PC-3 (cell line): ENCODE measurements at regions of chr10 and their contacts with region 1.

Region 1: GRCh38 chr10:90148116-90148855 is 446.9 kb downstream of the KIF20B start:
- DNase-seq: peak; percentile 69
- ATAC-seq: peak; percentile 57
- H3K4me3 ChIP-seq: peak overlapping the region; percentile 17; the same call in 1 of the 2 replicates
- H3K27ac ChIP-seq: peak overlapping the region; percentile 57
- H3K4me1 ChIP-seq: peaks cover 30% of the 10 kb centered on the region
- H3K27me3 ChIP-seq: no peaks in the 10 kb centered on the region
- CTCF ChIP-seq: peak; percentile 70

Region 2: DNA sequence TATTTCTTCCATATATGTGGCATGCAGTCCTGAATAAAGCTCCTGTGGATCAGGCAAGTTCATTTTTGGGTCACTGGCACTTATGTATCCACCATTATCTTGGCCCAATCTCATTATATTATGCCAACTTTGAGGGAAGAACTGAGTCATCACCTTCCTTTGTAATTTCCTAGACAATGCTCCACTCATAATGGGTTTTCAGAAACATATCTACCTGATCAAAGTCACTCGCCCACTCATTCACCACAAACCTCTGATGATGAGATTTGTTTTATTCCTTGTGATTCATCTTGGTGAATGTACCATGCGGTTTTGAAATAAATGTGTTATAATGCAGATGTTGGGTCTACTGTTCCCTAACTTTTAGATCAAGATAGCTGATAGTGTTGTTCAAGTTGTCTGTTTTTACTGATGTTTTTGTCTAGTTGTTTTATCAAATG is 79.0 kb after region 1 on chr10:
- CTCF ChIA-PET with region 1: no interaction called
- POLR2A ChIA-PET with region 1: no interaction called
- intact Hi-C with region 1: loop called (anchors 5 kb)
- DNase-seq: peak; percentile 93
- ATAC-seq: peak; percentile 85
- H3K4me3 ChIP-seq: no peak overlapping the region
- H3K27ac ChIP-seq: peak overlapping the region; percentile 96
- H3K4me1 ChIP-seq: peaks cover 37% of the 10 kb centered on the region
- H3K27me3 ChIP-seq: no peaks in the 10 kb centered on the region
- CTCF ChIP-seq: no peak

Region 3: DNA sequence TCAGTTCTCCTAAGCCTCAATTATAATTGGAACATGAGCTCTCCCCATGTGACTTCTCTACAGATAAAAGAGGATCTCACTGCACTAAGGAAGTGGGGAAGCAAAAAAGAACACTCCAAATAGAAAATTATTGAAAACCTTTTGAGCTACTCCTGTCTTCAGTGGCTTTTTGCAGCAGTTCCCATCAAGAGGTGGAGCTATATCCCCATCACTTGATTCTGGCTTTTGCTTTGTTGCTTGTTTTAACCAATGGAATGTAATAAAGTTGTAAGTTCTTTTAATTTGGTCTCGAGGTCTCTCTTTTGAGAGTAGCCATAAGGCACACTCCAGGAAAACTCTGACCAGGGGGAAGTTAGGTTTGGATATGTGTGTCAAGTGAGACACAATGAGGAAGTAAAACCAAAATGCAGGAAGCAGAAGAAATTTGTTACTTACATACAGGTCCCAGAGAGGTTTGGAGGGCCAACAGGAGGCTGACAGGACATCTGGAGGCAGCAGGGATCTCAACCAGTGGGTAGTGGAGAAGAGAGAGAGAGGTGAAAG is 140.2 kb after region 1 on chr10:
- CTCF ChIA-PET with region 1: no interaction called
- POLR2A ChIA-PET with region 1: no interaction called
- intact Hi-C with region 1: loop called (anchors 1 kb)
- DNase-seq: peak; percentile 53
- ATAC-seq: peak; percentile 66
- H3K4me3 ChIP-seq: no peak overlapping the region
- H3K27ac ChIP-seq: peak overlapping the region; percentile 42
- H3K4me1 ChIP-seq: peaks cover 19% of the 10 kb centered on the region
- H3K27me3 ChIP-seq: no peaks in the 10 kb centered on the region
- CTCF ChIP-seq: peak; percentile 63